ENCODE measurements at regions of chr5 and their contacts with region 1.

Region 1: DNA sequence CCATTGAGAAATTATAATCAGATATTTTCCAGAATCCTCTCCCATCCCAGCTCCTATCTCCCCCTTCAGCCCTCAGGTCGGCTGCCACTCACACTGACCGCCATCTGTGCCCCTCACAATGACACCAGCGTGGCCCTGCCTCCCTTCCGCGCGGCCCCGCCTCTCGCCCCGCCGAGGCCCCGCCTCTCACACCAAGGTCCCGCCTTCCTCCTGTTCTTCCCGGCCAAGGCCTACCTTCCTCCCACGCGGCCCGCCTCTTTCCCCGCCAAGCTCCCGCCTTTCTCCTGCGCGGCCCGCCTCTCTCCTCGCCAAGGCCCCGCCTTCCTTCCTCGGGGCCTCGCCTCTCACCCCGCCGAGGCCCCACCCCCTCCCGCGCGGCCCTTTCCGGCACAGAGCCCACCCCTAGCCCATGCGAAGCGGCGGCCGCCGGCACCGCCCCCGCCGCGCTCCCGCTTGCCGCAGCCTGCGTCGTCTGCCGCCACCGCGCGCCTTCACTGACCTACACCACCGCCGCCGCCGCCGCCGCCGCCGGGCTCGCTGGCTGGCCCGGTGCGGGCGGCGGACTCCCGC is at the start of gene DNAJC21:
- DNase-seq: peak; percentile 92 to 100
- H3K4me3 ChIP-seq: peak within 1 kb of the TSS; percentile 64
- H3K27ac ChIP-seq: peak within 1 kb of the TSS; percentile 70
- H3K4me1 ChIP-seq: peaks cover 31% of the 10 kb centered on the region
- H3K27me3 ChIP-seq: no peaks in the 10 kb centered on the region
- CTCF ChIP-seq: no peak
- total RNA-seq, gene DNAJC21: 111 and 128 TPM in 2 replicates

Region 2: GRCh38 chr5:33891788-33892619 is 1037.2 kb before region 1 on chr5 and contains the start of gene ADAMTS12:
- CTCF ChIA-PET with region 1: no interaction called
- POLR2A ChIA-PET with region 1: interaction called, 20 read pairs
- intact Hi-C with region 1: loop called (anchors 10 kb)
- DNase-seq: peak; percentile 68 to 87
- H3K4me3 ChIP-seq: peak within 1 kb of the TSS; percentile 67
- H3K27ac ChIP-seq: peak within 1 kb of the TSS; percentile 75
- H3K4me1 ChIP-seq: peaks cover 77% of the 10 kb centered on the region
- H3K27me3 ChIP-seq: no peaks in the 10 kb centered on the region
- CTCF ChIP-seq: no peak; the same call in 1 of the 2 replicates
- total RNA-seq, gene ADAMTS12: 71.1 and 103 TPM in 2 replicates

Region 3: DNA sequence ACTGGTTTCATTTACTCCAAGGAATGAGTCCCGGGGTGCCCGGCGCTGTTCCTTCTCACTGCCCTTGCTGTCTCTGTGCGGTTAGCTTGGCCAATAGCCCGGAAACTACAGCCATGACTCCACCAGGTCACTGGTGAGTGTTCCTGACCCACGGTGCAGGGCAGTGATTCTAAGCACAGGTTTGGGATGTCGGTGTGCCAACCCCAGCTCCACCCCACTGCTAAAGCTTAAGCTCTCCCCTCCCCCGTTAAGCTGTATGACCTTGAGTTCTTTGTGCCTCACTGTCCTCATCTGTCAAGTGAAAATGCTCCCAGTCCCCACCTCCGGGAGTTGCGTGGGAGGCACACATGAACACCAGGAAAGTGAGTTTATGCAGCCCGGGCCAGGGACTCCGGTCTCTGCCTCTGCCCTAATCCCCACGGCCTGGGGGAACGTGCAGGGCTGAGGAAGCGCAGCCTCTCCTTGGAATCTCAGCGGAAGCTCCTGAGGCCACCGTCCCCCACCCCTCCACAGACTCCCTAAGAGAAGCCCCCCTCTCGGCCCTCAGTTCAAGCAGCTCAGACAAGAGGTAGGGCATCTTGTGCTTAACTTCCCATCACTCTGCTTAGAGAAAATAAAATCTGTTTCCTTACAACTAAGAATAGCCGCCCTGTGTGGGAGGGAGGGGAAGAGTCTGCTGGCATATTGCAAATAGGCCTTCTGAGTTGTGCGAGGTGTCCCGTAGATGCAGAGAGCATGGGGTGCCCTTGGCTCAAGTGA is 365.1 kb before region 1 on chr5:
- CTCF ChIA-PET with region 1: no interaction called
- POLR2A ChIA-PET with region 1: interaction called, 19 read pairs
- intact Hi-C with region 1: no loop called
- DNase-seq: peak; percentile 77 to 85
- H3K4me3 ChIP-seq: no peak overlapping the region
- H3K27ac ChIP-seq: peak overlapping the region; percentile 64
- H3K4me1 ChIP-seq: peaks cover 20% of the 10 kb centered on the region
- H3K27me3 ChIP-seq: no peaks in the 10 kb centered on the region
- CTCF ChIP-seq: no peak

Region 4: GRCh38 chr5:34767180-34767579 is 162.1 kb before region 1 on chr5:
- CTCF ChIA-PET with region 1: no interaction called
- POLR2A ChIA-PET with region 1: interaction called, 13 read pairs
- intact Hi-C with region 1: no loop called
- DNase-seq: no peak
- H3K4me3 ChIP-seq: no peak overlapping the region
- H3K27ac ChIP-seq: no peak overlapping the region
- H3K4me1 ChIP-seq: peaks cover 18% of the 10 kb centered on the region
- H3K27me3 ChIP-seq: no peaks in the 10 kb centered on the region
- CTCF ChIP-seq: no peak

Region 5: DNA sequence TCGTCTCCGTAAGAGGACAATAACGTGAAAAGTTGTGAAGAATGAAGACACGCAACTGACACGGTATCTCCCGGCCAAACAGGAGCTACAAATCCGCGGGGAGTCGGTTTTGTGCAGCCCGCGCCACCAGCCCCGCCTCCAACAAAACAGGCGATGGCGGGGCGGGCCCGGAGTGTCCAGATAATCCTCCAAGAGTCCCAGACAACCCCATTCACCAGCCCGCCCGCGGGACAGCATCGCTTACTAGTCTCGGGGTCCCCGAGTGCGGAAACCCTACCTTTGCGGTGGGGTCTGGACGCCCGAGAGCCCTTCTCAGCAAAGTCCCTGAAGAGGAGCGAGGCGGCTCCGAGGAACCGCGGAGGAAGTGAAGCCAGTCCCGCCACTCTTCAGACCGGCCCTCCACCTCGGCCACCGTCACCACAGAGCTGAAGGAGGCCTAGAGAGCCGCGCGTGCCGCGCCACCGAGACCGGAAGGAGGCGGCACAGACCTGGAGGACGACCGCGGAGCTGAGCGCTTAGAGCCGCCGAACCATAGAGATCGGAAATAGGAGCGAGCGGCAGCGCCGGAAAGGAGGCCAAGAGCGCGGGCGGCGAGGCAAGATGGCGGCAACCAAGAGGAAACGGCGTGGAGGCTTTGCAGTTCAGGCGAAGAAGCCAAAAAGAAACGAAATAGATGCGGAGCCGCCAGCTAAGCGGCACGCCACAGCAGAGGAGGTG is 13.9 kb before region 1 on chr5 and contains the starts of genes BRIX1 and RAD1:
- CTCF ChIA-PET with region 1: interaction called, 13 read pairs
- POLR2A ChIA-PET with region 1: interaction called, 87 read pairs
- intact Hi-C with region 1: loop called (anchors 1 kb)
- DNase-seq: peak; percentile 95 to 100
- H3K4me3 ChIP-seq: peak within 1 kb of the TSS; percentile 81
- H3K27ac ChIP-seq: peak within 1 kb of the TSS; percentile 73
- H3K4me1 ChIP-seq: peaks cover 42% of the 10 kb centered on the region
- H3K27me3 ChIP-seq: no peaks in the 10 kb centered on the region
- CTCF ChIP-seq: 0 out of 2 replicates have a peak, but pooled peaks have one; percentile 39
- total RNA-seq, gene BRIX1: 71.9 and 73.4 TPM in 2 replicates
- total RNA-seq, gene RAD1: 43.8 and 63.0 TPM in 2 replicates

Region 6: DNA sequence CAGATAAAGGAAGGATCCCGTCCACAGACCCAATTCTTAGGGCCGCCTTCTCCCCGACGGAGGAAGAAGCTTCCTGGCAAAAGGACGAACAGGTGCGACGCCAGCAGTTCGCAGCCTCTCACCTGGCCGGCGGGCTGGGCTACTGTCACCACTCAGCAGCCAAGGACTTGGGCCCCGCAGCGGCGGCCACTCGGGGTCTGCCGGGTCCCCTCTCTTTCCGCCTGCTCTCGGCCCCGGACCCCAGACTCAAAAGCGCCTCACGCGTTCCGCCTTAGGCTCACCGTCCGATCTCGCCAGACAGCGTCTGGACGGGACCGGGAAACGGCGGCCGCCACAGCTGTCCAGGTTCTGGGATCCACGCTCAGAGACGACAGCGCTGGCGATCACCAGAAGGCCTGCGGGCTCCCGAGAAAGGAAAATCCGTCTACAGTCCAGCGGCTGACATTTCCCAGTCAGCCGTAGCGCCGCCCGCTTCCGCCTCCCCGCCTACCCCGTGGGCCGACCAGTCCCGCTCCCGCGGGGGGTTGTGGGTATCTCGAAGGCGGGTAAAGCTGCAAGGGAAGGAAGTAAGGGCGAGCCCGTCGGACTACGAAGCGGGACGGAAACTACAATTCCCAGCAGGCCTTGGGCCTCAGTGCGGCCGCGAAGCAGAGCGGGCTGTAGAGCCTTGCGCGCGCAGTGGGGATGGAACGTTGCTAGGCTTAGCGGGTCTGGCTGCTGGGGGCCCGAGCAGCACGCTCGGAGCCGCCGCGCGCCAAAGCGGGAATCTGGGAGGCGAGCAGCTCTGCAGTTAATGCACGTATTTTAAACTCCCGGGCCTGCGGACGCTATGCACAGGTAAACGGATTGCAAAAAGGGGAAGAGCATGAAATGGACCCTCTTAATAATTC is 1222.4 kb after region 1 on chr5 and contains the starts of genes LMBRD2 and SKP2:
- CTCF ChIA-PET with region 1: no interaction called
- POLR2A ChIA-PET with region 1: no interaction called
- intact Hi-C with region 1: loop called (anchors 5 kb)
- DNase-seq: peak; percentile 98 to 100
- H3K4me3 ChIP-seq: peak within 1 kb of the TSS; percentile 90
- H3K27ac ChIP-seq: peak within 1 kb of the TSS; percentile 38
- H3K4me1 ChIP-seq: peaks cover 17% of the 10 kb centered on the region
- H3K27me3 ChIP-seq: no peaks in the 10 kb centered on the region
- CTCF ChIP-seq: no peak
- total RNA-seq, gene LMBRD2: 8.5 and 18.0 TPM in 2 replicates
- total RNA-seq, gene SKP2: 121 and 153 TPM in 2 replicates